H1 (cell line): ENCODE measurements at regions of chr16 and their contacts with region 1.

Region 1: DNA sequence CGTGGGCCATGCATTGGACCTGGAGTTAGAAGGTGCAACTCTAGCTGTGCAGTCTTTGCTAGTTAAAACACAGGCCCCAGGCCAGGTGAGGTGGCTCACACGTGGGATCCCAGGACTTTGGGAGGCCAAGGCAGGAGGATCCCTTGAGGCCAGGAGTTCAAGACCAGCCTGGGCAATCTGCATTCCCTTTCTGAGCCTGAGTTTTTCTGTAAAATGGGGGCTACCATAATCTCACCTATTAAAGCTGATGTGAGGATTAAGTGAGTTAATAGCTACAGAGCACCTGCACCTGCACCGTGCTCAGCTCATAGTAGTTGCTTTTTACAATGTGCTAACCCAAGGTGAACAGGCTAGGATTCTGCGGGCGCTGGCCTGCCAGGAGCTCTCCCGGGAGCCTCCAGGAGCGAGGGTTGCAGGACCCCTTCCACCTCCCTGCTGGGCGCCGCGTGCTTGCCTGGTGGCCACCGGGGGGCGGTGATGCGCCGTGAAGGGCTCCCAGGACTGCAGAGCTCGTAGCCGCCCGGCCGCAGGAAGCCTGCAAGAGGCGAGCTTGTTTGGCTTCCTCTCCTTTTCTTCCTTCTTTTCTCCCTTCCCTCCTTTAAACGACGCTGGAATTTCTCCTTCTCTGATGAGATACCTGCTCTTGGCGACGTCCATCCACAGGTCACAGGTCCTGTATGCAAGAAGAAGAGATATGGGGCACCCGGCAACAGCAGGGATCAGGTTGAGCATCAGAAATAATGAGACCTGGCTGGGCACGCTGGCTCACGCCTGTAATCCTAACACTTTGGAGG is 51.3 kb downstream of the ZFP90 start:
- DNase-seq: peak; percentile 64 to 97
- H3K4me3 ChIP-seq: no peak overlapping the region
- H3K27ac ChIP-seq: no peak overlapping the region
- H3K4me1 ChIP-seq: 0 out of 7 replicates have a peak, but pooled peaks cover 0 to 3% (median 0%) of the 10 kb centered on the region in 4 experiments
- H3K27me3 ChIP-seq: no peaks in the 10 kb centered on the region
- CTCF ChIP-seq: peak; percentile 83 to 89 (median 86)
- EP300 ChIP-seq: no peak
- POLR2A ChIP-seq: no peak
- RAD21 ChIP-seq: peak; percentile 94 to 96

Region 2: DNA sequence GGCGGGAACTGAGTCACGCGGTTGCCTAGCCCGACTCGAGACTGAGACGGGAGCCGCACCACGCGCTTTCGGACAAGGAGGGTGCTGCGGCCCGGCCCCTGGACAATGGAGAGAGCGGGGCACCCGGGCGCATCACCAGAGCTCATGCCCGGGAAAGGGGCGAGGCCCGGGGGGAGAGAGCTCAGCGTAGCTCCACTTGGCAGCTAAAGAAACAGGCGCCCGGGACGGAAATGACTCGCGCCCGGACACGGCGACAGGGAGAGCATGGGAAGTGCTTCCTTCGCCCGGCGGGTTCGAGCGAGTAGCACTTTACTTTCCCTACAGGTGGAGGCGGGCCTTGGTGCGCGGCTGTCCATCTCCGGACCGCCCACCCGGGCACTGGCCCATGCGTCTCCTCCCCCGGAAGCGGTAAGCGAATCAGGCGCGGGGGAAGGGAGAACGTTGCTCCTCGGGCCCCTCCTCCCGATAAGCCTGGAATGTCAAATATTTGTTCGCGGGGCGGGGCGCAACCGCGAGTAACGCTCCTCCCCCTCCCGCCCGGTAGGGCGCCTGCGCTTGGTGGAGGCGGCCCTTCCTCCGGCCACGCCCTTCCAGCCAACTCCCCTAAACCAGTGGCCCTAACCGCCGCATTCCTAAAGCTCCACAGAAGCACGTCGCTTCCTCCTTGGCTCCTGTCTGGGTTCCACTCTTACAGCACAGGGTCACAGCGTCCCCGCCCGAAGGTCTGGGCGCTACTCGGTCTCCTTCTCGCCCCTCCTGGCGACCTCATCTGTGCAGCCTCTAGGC is 353.0 kb before region 1 on chr16:
- CTCF ChIA-PET with region 1: no interaction called
- POLR2A ChIA-PET with region 1: no interaction called
- DNase-seq: peak; percentile 97 to 99
- H3K4me3 ChIP-seq: peak overlapping the region; percentile 59 to 85 (median 82)
- H3K27ac ChIP-seq: peak overlapping the region; percentile 84
- H3K4me1 ChIP-seq: peaks cover 0 to 28% (median 20%) of the 10 kb centered on the region in 4 experiments; a peak in 5 of 7 replicates
- H3K27me3 ChIP-seq: no peaks in the 10 kb centered on the region
- CTCF ChIP-seq: no peak
- EP300 ChIP-seq: peak in 1 of 2 experiments; percentile 24; a peak in 1 of 3 replicates
- POLR2A ChIP-seq: peak; percentile 71 to 97
- RAD21 ChIP-seq: no peak

Region 3: DNA sequence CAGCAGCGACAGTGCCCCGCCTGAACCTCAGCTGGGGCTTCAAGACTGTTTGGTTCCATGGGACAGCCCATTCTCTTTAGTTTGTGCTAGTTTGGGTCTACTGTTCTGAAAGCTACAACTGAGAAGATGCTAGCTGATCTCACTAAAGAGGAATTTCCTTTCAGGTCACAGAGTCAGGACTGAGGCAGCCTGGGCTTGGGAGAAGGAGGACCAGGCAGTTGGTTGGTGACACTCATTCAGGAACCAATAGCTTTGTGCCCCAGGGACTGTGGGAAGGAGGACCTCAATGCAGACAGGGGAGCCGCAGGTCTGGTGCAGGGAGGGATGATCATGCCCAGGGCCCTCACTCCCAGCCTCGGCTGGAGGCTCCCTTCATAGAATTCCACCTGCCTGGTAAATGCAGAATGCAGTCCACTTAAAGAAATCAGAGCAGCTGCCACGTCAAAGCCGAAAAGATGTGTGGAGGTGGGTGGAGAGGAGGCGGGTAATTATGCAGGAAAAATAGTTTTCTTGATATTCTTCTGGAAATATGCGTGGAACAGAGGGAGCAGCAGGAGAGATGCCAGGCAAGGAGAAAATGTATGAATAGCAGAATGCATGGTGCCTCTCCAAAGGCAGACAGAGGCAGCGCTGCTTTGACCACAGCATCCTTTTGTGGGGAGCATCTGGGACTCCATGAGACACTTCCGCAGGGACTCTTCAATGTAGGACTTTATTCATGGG is 83.9 kb before region 1 on chr16:
- CTCF ChIA-PET with region 1: no interaction called
- POLR2A ChIA-PET with region 1: no interaction called
- DNase-seq: no peak
- H3K4me3 ChIP-seq: no peak overlapping the region
- H3K27ac ChIP-seq: no peak overlapping the region
- H3K4me1 ChIP-seq: no peaks in the 10 kb centered on the region
- H3K27me3 ChIP-seq: peaks cover 0 to 3% (median 1%) of the 10 kb centered on the region in 4 experiments; a peak in 2 of 7 replicates
- CTCF ChIP-seq: no peak
- EP300 ChIP-seq: no peak
- POLR2A ChIP-seq: no peak
- RAD21 ChIP-seq: no peak

Region 4: GRCh38 chr16:68520649-68521086 is 69.7 kb before region 1 on chr16:
- CTCF ChIA-PET with region 1: interaction called, 16 read pairs
- POLR2A ChIA-PET with region 1: no interaction called
- DNase-seq: peak; percentile 58 to 96
- H3K4me3 ChIP-seq: peak overlapping the region in 3 of 4 experiments; percentile 2 to 43 (median 14); a peak in 4 of 8 replicates
- H3K27ac ChIP-seq: no peak overlapping the region
- H3K4me1 ChIP-seq: no peaks in the 10 kb centered on the region; a peak in 1 of 7 replicates
- H3K27me3 ChIP-seq: peaks cover 0 to 7% (median 3%) of the 10 kb centered on the region in 4 experiments; a peak in 4 of 7 replicates
- CTCF ChIP-seq: peak; percentile 99 to 100 (median 100)
- EP300 ChIP-seq: 0 out of 3 replicates have a peak, but pooled peaks of 1 of the 2 experiments have one; percentile 33
- POLR2A ChIP-seq: no peak
- RAD21 ChIP-seq: peak; percentile 61 to 73

Region 5: DNA sequence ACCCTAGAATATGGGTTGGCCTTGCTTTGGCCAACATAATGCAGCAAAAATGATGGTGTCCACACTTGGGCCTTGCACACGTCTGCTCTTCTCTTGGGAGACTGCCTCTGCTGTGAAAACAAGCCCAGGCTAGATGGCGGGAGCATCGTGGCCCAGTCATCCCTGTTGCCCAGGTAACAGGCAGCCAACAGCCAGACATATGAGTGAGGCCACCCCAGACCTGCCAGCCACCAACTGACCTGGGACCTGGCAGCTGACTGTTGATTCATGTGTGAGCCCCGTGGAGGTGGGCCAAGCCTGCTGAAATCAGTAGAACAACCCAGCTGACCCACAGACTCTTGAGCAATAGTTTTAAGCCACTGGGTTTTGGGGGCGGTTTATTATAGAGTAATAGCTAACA is 15.3 kb after region 1 on chr16:
- CTCF ChIA-PET with region 1: interaction called, 12 read pairs
- POLR2A ChIA-PET with region 1: no interaction called
- DNase-seq: no peak
- H3K4me3 ChIP-seq: no peak overlapping the region
- H3K27ac ChIP-seq: no peak overlapping the region
- H3K4me1 ChIP-seq: peaks cover 0 to 3% (median 0%) of the 10 kb centered on the region in 4 experiments; a peak in 2 of 7 replicates
- H3K27me3 ChIP-seq: no peaks in the 10 kb centered on the region
- CTCF ChIP-seq: no peak
- EP300 ChIP-seq: no peak
- POLR2A ChIP-seq: no peak
- RAD21 ChIP-seq: no peak

Region 6: DNA sequence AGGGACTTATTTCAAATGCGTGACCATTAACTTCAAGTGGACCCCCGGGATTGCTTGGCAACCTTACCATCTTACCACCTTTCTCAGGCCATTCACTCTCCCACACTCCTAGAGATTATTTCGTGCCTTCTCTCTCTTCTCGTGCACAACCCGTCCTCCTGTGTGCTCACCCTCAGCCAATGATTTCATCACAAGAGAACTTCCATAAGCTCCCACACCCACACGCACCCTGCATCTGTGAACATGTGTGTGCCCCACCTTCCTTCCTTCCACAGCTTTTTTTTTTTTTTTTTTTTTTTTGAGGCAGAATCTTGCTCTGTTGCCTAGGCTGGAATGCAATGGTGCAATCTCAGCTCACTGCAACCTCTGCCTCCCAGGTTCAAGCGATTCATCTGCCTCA is 27.3 kb after region 1 on chr16:
- CTCF ChIA-PET with region 1: no interaction called
- POLR2A ChIA-PET with region 1: no interaction called
- DNase-seq: no peak
- H3K4me3 ChIP-seq: no peak overlapping the region
- H3K27ac ChIP-seq: no peak overlapping the region; the same call in 1 of the 2 replicates
- H3K4me1 ChIP-seq: no peaks in the 10 kb centered on the region
- H3K27me3 ChIP-seq: no peaks in the 10 kb centered on the region
- CTCF ChIP-seq: no peak
- EP300 ChIP-seq: no peak
- POLR2A ChIP-seq: no peak
- RAD21 ChIP-seq: no peak

Region 7: GRCh38 chr16:68644715-68645493 is 54.5 kb after region 1 on chr16 and contains the start of gene CDH3:
- CTCF ChIA-PET with region 1: interaction called, 16 read pairs
- POLR2A ChIA-PET with region 1: interaction called, 18 read pairs
- DNase-seq: peak; percentile 82 to 93
- H3K4me3 ChIP-seq: peak within 1 kb of the TSS; percentile 90 to 97 (median 90)
- H3K27ac ChIP-seq: peak within 1 kb of the TSS; percentile 46
- H3K4me1 ChIP-seq: peaks cover 9 to 19% (median 14%) of the 10 kb centered on the region in 4 experiments
- H3K27me3 ChIP-seq: peaks cover 0 to 11% (median 10%) of the 10 kb centered on the region in 4 experiments; a peak in 4 of 7 replicates
- CTCF ChIP-seq: no peak
- EP300 ChIP-seq: no peak; a peak in 1 of 3 replicates
- POLR2A ChIP-seq: peak in 1 of 2 experiments; percentile 79; a peak in 1 of 3 replicates
- RAD21 ChIP-seq: no peak
- total RNA-seq, gene CDH3: 142 and 146 TPM in 2 replicates

Region 8: DNA sequence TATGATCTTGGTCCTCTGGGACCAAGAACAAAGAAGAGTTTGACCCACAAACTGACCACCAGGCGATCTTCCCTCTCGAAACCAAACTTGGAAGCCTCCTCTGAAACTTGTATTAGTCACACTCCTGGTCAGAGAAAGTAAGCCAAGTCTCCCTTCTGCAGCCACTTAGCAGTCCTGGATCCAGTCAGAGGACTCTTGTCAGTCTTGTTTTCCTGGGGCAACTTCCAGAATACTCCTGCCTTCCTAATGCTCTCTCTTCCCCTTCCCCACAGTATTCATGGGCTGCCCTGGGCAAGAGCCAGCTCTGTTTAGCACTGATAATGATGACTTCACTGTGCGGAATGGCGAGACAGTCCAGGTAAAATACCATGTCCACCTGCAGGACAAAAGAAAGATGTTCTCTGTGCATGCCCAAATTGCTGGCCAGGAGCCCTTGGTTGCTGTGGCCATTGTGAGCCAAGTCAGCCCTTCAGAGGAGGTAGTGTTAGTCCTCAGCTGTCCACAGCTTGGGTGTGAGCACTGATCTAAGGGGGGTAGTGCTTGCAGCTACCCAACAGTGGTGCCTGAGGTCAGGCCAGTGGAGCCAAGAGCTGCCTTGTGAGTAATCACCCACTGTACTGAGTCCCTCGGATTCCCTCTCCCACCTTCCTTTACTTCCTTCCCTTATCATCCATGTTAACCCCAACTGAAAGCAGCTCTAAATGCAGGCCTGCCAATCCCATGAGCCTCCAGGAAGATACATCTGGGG is 85.9 kb after region 1 on chr16:
- CTCF ChIA-PET with region 1: interaction called, 32 read pairs
- POLR2A ChIA-PET with region 1: no interaction called
- DNase-seq: no peak
- H3K4me3 ChIP-seq: no peak overlapping the region
- H3K27ac ChIP-seq: no peak overlapping the region
- H3K4me1 ChIP-seq: no peaks in the 10 kb centered on the region
- H3K27me3 ChIP-seq: no peaks in the 10 kb centered on the region
- CTCF ChIP-seq: no peak
- EP300 ChIP-seq: no peak
- POLR2A ChIP-seq: no peak
- RAD21 ChIP-seq: no peak

Region 9: GRCh38 chr16:68744369-68745280 is 154.2 kb after region 1 on chr16:
- CTCF ChIA-PET with region 1: no interaction called
- POLR2A ChIA-PET with region 1: no interaction called
- DNase-seq: peak in 1 of 2 experiments; percentile 63
- H3K4me3 ChIP-seq: peak overlapping the region in 3 of 4 experiments; percentile 5 to 39 (median 7); a peak in 5 of 8 replicates
- H3K27ac ChIP-seq: peak overlapping the region; percentile 63
- H3K4me1 ChIP-seq: peaks cover 8 to 29% (median 18%) of the 10 kb centered on the region in 4 experiments
- H3K27me3 ChIP-seq: no peaks in the 10 kb centered on the region
- CTCF ChIP-seq: no peak
- EP300 ChIP-seq: peak in 1 of 2 experiments; percentile 61; a peak in 1 of 3 replicates
- POLR2A ChIP-seq: no peak
- RAD21 ChIP-seq: 0 out of 4 replicates have a peak, but pooled peaks of 1 of the 2 experiments have one; percentile 18

Region 10: GRCh38 chr16:68800257-68800875 is 210.0 kb after region 1 on chr16:
- CTCF ChIA-PET with region 1: interaction called, 10 read pairs
- POLR2A ChIA-PET with region 1: interaction called, 3 read pairs
- DNase-seq: peak; percentile 60 to 82
- H3K4me3 ChIP-seq: no peak overlapping the region
- H3K27ac ChIP-seq: no peak overlapping the region
- H3K4me1 ChIP-seq: peaks cover 4 to 11% (median 5%) of the 10 kb centered on the region in 4 experiments; a peak in 4 of 7 replicates
- H3K27me3 ChIP-seq: no peaks in the 10 kb centered on the region; a peak in 1 of 7 replicates
- CTCF ChIP-seq: peak; percentile 63 to 88 (median 80)
- EP300 ChIP-seq: no peak
- POLR2A ChIP-seq: no peak
- RAD21 ChIP-seq: peak; percentile 91 to 93